Right cardiac atrium (tissue), 5 donors: ENCODE measurements at regions of chr9 and their contacts with region 1.

Region 1: DNA sequence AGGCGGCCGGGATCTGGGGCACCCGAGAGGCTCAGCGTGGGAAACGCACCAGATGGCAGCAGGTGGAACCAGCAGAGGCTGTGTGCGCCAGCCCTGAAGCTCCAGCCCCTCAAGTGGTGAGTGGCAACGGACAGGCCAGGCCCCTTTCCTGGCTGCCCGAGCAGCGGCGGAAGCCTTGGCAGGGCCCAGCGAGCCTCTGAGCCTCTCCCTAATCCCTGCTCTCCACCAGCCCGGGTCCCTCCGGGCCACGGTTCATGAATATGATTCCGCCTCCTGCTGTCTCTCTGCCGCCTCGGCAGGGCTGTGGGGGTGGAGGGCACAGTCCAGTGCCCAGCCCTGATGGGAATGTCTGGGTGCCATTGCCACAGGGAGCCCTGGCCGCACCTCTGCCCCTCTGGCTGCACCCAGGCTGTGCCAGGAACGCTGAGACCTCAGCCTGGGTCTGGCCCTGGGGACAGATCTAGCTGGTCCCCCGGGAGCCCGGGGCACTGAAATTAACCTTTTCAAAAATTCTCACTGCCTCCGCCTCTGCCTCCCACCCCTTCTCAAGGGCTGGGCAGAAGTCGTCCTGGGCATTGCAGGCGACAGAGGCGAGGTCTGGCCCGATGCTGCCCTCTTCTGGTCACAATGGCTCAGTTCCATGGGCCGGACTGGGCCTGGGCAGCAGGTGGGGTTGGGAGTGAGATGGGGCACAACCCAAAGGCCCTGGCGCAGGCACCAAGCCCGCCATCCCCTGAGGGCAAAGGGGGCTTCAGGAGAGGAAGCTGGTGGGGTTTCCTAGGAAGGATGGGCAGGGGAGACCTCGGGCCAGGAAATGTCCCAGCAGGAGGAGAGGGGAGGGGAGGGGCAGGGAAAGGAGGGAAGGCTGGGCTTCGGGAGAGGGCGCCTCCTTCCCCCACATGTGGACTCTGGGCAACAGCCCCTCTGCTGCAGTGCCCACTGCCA is 20.3 kb downstream of the CCDC187 start:
- DNase-seq: peak; percentile 77 to 90 (median 88)
- ATAC-seq: peak; percentile 93 to 94
- H3K4me3 ChIP-seq: no peak overlapping the region
- H3K27ac ChIP-seq: no peak overlapping the region
- H3K4me1 ChIP-seq: no peaks in the 10 kb centered on the region
- H3K27me3 ChIP-seq: no peaks in the 10 kb centered on the region

Region 2: DNA sequence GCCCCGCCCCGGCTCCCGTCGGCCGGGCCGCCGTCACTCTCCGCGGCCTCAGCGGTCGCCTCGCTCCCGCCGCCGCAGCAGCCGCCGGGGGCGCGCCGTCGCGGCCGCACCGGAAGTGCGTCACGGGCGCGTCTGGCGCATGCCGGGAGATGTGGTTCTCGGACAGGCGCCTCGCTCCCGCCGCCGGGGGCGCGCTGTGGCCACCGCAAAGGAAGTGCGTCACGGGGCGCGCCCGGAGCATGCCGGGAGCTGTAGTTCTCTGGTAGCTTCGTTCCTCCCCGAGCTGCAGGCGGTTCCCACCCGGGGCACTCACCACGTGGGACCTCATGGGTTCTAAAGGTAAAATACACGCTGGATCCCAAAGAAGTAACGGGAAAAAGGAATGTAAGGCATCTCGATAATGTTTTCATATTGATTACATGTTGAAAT is 322.3 kb before region 1 on chr9 and contains the start of gene UBAC1:
- intact Hi-C with region 1: loop called in 1 of 4 experiments (anchors 10 kb)
- DNase-seq: peak; percentile 97 to 99 (median 99)
- ATAC-seq: peak; percentile 93 to 94
- H3K4me3 ChIP-seq: peak within 1 kb of the TSS; percentile 96
- H3K27ac ChIP-seq: peak within 1 kb of the TSS; percentile 98
- H3K4me1 ChIP-seq: no peaks in the 10 kb centered on the region
- H3K27me3 ChIP-seq: no peaks in the 10 kb centered on the region
- total RNA-seq, gene UBAC1: 64.0 to 88.7 (median 76.2) TPM

Region 3: DNA sequence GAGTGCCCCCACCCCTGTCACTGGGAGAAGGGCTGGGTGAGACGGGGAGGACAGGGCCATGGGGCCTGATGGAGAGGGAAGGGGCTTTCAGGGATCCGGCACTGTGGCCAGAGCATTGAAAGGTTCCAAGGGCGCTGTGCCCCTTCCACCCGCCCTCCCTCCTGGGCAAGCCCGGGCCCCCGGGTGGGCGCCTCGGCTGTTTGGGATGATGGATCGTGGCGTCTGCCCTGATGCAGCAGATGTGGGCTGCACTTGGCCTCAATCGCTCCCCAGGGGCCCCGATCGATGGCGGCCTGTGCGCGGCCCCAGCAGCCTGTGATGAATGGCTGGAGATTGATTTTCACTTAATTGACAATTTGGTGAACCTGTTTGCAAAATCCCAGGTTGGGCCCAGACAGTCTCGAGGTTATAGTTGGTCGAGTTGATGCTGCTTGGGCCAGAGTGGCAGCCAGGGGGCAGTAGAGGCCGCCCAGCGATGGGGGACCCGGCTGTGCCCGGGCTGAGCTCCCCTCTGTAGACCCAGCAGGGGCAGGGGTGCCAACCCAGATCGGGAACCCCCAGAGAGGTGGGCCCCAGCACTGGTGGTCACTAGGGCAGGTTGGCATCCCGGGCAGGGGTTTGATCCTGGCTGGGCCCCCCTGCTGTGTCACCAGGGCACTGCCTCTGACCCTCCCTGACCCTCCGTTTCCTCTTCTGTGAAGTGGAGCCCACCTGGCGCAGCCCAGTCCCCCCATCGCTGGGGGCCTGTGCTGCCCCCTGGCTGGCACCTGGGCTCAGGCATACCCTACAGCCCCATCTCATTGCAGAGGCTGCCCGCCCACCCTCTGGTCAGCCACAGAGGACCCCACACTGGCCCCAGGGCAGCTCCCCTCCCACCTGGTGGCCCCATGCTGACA is 113.3 kb before region 1 on chr9:
- intact Hi-C with region 1: loop called in 2 of 4 experiments (anchors 5 to 10 kb)
- DNase-seq: peak; percentile 11 to 69 (median 56)
- ATAC-seq: peak; percentile 10 to 58
- H3K4me3 ChIP-seq: no peak overlapping the region
- H3K27ac ChIP-seq: no peak overlapping the region
- H3K4me1 ChIP-seq: no peaks in the 10 kb centered on the region
- H3K27me3 ChIP-seq: no peaks in the 10 kb centered on the region